ENCODE measurements at regions of chr11 and their contacts with region 1.

Region 1: DNA sequence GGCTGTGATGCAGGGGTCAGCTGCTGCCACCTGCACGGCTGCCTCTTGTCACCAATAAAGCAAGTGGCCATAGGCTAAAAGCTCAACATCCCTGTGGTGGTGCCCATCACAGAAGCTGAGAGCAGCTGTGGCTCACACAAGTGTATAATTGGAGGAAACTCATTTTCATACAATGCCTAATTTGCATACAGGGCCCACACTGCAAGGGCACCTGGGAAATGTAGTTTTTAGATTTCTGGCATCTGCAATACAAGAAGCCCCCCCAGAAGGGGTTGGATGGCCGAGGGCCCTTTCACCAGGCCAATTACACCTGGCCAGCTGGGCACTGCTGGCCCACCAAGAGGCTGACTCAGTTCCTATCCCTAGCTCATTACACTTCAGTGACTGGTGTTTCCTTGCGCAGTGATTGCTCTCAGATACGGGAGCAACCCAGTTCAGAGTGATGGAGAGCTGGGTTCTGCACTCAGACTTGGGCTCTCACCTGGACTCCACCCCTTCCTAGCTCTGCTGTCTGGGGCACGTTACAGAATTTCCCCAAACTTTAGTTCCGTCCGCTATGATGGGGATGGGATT is 81.0 kb upstream of the SHANK2 start:
- DNase-seq: no peak
- H3K4me3 ChIP-seq: no peak overlapping the region
- H3K27ac ChIP-seq: no peak overlapping the region
- H3K4me1 ChIP-seq: no peaks in the 10 kb centered on the region
- H3K27me3 ChIP-seq: no peaks in the 10 kb centered on the region
- CTCF ChIP-seq: no peak

Region 2: GRCh38 chr11:71086675-71087258 is 246.6 kb before region 1 on chr11:
- CTCF ChIA-PET with region 1: interaction called, 10 read pairs
- dilution Hi-C with region 1: no loop called
- in situ Hi-C with region 1: no loop called
- intact Hi-C with region 1: no loop called
- DNase-seq: peak; percentile 14
- H3K4me3 ChIP-seq: no peak overlapping the region
- H3K27ac ChIP-seq: no peak overlapping the region
- H3K4me1 ChIP-seq: no peaks in the 10 kb centered on the region
- H3K27me3 ChIP-seq: no peaks in the 10 kb centered on the region
- CTCF ChIP-seq: peak; percentile 41 to 64

Region 3: GRCh38 chr11:71120490-71120896 is 212.9 kb before region 1 on chr11:
- CTCF ChIA-PET with region 1: interaction called, 4 read pairs
- dilution Hi-C with region 1: no loop called
- in situ Hi-C with region 1: no loop called
- intact Hi-C with region 1: loop called (anchors 1 kb)
- DNase-seq: peak; percentile 48
- H3K4me3 ChIP-seq: no peak overlapping the region
- H3K27ac ChIP-seq: no peak overlapping the region
- H3K4me1 ChIP-seq: no peaks in the 10 kb centered on the region
- H3K27me3 ChIP-seq: no peaks in the 10 kb centered on the region
- CTCF ChIP-seq: peak; percentile 46 to 63

Region 4: GRCh38 chr11:71302911-71303310 is 30.5 kb before region 1 on chr11:
- CTCF ChIA-PET with region 1: no interaction called
- dilution Hi-C with region 1: loop called (anchors 5 kb)
- in situ Hi-C with region 1: no loop called
- intact Hi-C with region 1: loop called (anchors 2 kb)
- DNase-seq: no peak
- H3K4me3 ChIP-seq: no peak overlapping the region
- H3K27ac ChIP-seq: no peak overlapping the region
- H3K4me1 ChIP-seq: peaks cover 21% of the 10 kb centered on the region
- H3K27me3 ChIP-seq: no peaks in the 10 kb centered on the region
- CTCF ChIP-seq: peak in 1 of 2 donors; percentile 1

Region 5: GRCh38 chr11:71453037-71453898 is 119.9 kb after region 1 on chr11 and contains the start of gene NADSYN1:
- CTCF ChIA-PET with region 1: no interaction called
- dilution Hi-C with region 1: no loop called
- in situ Hi-C with region 1: no loop called
- intact Hi-C with region 1: no loop called
- DNase-seq: peak; percentile 90
- H3K4me3 ChIP-seq: peak within 1 kb of the TSS; percentile 94 to 100 (median 99)
- H3K27ac ChIP-seq: peak within 1 kb of the TSS; percentile 61
- H3K4me1 ChIP-seq: peaks cover 30% of the 10 kb centered on the region
- H3K27me3 ChIP-seq: no peaks in the 10 kb centered on the region
- CTCF ChIP-seq: no peak
- total RNA-seq, gene NADSYN1: 84.9 to 103 TPM